T-cell (primary cell): ENCODE measurements at regions of chr10 and their contacts with region 1.

Region 1: DNA sequence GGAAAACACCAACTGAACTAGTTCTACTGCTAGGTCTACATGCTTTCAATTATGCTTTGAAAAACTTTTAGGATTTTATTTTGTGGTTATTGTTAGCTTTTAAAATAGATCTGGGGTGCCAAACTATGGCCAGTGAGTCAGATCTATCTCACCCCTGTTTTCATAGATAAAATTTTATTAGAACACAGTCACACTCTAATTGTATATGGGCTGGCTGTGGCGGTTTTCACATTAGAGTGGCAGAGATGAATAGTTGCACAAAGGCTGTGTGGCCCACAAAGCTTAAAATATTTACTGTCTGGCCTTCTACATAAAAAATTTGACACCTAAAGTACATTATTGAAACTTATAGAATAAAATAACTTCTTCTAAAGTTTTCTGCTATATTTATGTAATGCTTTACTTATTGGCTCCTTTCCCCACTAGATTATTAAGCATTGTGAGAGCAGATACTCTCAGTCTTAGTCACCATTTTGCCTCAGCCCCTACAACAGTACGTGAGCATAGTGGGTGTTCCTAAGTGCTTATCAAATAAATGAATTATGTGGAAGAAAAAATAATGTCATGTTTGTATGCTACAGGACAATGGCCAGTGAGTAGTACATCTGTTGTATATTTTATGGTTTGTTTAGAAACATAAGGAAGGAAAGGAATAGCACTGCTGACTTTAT is 5.4 kb upstream of the SUV39H2 start:
- DNase-seq: no peak
- ATAC-seq: no peak
- H3K4me3 ChIP-seq: no peak overlapping the region
- H3K4me3 Mint-ChIP-seq: no peak overlapping the region
- H3K27ac ChIP-seq: no peak overlapping the region
- H3K27ac Mint-ChIP-seq: no peak overlapping the region
- H3K4me1 ChIP-seq: peaks cover 3 to 5% of the 10 kb centered on the region in 2 experiments
- H3K4me1 Mint-ChIP-seq: peaks cover 16 to 21% (median 18%) of the 10 kb centered on the region in 3 donors
- H3K27me3 ChIP-seq: no peaks in the 10 kb centered on the region
- H3K27me3 Mint-ChIP-seq: no peaks in the 10 kb centered on the region

Region 2: DNA sequence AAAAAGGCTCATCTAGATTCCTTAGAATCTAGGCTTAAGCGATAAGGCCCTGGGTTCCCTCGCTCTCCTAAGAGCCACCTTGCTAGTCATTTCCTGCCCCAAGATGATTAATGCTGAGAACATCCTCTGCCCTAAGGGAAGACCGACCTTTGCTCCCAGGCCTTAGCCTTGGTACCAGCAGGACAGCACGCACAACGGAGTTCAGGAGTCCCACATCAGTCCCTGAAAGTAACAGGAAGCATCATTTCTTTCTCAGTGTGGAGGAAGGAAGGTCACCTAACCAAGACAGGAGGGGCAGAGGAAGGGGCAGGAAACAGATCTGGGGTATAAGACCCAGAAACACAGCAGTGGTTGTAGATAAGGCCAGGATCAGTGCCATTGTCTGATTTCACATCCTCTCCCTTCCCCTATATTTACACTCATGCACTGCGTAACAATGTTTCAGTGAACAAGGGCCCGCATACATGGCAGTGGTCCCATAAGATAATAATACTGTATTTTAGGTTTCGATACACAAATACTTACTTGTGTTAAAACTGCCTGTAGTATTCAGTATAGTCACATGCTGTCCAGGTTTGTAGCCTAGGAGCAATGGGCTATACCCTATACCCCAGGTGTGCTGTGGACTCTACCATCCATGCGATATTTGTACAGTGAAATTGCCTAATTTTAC is 90.4 kb before region 1 on chr10:
- CTCF ChIA-PET with region 1: no interaction called
- POLR2A ChIA-PET with region 1: interaction called in 1 of 2 experiments, 12 read pairs
- DNase-seq: peak in 1 of 35 experiments; percentile 3
- ATAC-seq: peak in 3 of 4 experiments; percentile 34 to 47 (median 42)
- H3K4me3 ChIP-seq: no peak overlapping the region
- H3K4me3 Mint-ChIP-seq: no peak overlapping the region
- H3K27ac ChIP-seq: no peak overlapping the region
- H3K27ac Mint-ChIP-seq: peak overlapping the region; percentile 47 to 73
- H3K4me1 ChIP-seq: peaks cover 0 to 3% of the 10 kb centered on the region in 2 experiments
- H3K4me1 Mint-ChIP-seq: peaks cover 4 to 7% (median 5%) of the 10 kb centered on the region in 3 donors
- H3K27me3 ChIP-seq: peaks cover 0 to 3% of the 10 kb centered on the region in 2 experiments
- H3K27me3 Mint-ChIP-seq: no peaks in the 10 kb centered on the region

Region 3: DNA sequence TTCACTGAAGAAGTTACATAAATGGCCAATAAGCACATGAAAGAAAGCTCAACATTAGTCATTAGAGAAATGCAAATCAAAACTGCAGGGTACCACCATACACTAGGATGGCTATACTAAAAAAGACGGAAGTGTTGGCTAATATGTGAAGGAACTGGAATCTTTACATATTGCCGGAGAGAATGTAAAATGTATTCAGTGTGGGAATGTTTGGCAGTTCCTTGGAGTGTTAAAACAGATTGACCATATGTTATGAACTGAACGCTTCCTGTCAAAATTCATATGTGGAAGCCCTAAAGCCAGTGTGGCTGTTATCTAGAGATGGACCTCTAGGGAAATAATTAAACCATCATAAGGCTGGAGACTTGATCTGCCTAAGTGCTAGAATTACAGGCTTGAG is 38.6 kb after region 1 on chr10:
- CTCF ChIA-PET with region 1: no interaction called
- POLR2A ChIA-PET with region 1: no interaction called
- DNase-seq: no peak
- ATAC-seq: no peak
- H3K4me3 ChIP-seq: no peak overlapping the region
- H3K4me3 Mint-ChIP-seq: no peak overlapping the region
- H3K27ac ChIP-seq: no peak overlapping the region
- H3K27ac Mint-ChIP-seq: no peak overlapping the region
- H3K4me1 ChIP-seq: no peaks in the 10 kb centered on the region
- H3K4me1 Mint-ChIP-seq: peaks cover 20 to 35% (median 20%) of the 10 kb centered on the region in 3 donors
- H3K27me3 ChIP-seq: no peaks in the 10 kb centered on the region
- H3K27me3 Mint-ChIP-seq: no peaks in the 10 kb centered on the region

Region 4: DNA sequence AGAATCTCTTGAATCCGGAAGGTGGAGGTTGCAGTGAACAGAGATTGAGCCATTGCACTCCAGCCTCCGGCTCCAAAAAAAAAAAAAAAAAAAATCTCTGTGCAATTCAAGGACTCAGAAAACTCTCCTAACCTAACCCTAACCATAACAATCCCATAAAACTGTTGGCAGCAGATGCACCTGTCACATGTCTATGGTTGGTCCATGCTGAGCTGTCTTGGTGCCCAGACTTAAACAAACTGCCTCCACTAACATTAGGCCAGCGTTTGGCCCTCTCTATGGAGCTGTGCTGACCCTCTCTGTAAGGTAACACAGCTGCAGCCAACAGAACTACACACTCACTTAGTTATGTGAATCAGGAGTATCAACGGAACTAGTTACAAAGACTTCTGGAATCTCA is 1431.1 kb after region 1 on chr10:
- CTCF ChIA-PET with region 1: no interaction called
- POLR2A ChIA-PET with region 1: no interaction called
- DNase-seq: no peak
- ATAC-seq: no peak
- H3K4me3 ChIP-seq: no peak overlapping the region
- H3K4me3 Mint-ChIP-seq: no peak overlapping the region
- H3K27ac ChIP-seq: no peak overlapping the region
- H3K27ac Mint-ChIP-seq: no peak overlapping the region
- H3K4me1 ChIP-seq: no peaks in the 10 kb centered on the region
- H3K4me1 Mint-ChIP-seq: no peaks in the 10 kb centered on the region
- H3K27me3 ChIP-seq: no peaks in the 10 kb centered on the region
- H3K27me3 Mint-ChIP-seq: peaks cover 3 to 5% of the 10 kb centered on the region in 2 donors